AG04450 (cell line): ENCODE measurements at regions of chr9 and their contacts with region 1.

Region 1: DNA sequence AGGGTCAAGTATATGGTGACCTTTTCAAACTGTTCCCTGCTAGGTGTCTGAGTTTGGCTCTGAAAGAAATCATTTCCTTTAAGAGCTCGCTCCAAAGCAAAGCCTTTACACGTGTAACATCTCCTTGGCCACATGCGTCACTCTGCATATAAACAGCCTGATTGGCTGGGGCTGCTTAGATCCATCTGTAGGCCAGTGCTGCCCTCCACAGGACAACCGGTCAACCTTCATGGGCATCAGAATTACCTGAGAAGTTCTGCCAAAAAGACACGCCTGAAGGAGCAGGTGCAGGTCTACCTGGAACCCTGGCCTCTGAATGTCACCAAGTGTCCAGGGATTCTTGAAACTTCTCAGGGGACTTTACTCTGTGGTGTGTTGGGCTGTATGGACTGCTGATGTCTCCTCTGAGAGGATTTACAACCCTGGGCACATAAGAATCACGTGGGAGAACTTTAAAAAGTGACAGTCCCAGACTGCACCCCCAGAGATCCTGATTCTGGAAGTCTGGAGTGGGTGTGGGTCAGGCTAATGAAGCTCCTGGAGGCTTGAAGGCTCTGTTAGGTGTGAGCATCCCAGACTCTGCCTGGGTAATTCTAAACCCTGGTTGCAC is 497.6 kb downstream of the GADD45G start:
- DNase-seq: peak; percentile 55
- H3K4me3 ChIP-seq: no peak overlapping the region
- H3K27ac ChIP-seq: no peak overlapping the region
- H3K27me3 ChIP-seq: no peaks in the 10 kb centered on the region
- CTCF ChIP-seq: peak; percentile 73

Region 2: GRCh38 chr9:89576404-89576839 is 526.0 kb before region 1 on chr9:
- CTCF ChIA-PET with region 1: interaction called, 21 read pairs
- POLR2A ChIA-PET with region 1: no interaction called
- DNase-seq: no peak
- H3K4me3 ChIP-seq: no peak overlapping the region
- H3K27ac ChIP-seq: no peak overlapping the region
- H3K27me3 ChIP-seq: peaks cover 2% of the 10 kb centered on the region
- CTCF ChIP-seq: peak; percentile 66

Region 3: GRCh38 chr9:89597711-89598625 is 504.4 kb before region 1 on chr9:
- CTCF ChIA-PET with region 1: interaction called, 187 read pairs
- POLR2A ChIA-PET with region 1: no interaction called
- DNase-seq: peak; percentile 15
- H3K4me3 ChIP-seq: no peak overlapping the region
- H3K27ac ChIP-seq: no peak overlapping the region
- H3K27me3 ChIP-seq: peaks cover 34% of the 10 kb centered on the region
- CTCF ChIP-seq: peak; percentile 76

Region 4: DNA sequence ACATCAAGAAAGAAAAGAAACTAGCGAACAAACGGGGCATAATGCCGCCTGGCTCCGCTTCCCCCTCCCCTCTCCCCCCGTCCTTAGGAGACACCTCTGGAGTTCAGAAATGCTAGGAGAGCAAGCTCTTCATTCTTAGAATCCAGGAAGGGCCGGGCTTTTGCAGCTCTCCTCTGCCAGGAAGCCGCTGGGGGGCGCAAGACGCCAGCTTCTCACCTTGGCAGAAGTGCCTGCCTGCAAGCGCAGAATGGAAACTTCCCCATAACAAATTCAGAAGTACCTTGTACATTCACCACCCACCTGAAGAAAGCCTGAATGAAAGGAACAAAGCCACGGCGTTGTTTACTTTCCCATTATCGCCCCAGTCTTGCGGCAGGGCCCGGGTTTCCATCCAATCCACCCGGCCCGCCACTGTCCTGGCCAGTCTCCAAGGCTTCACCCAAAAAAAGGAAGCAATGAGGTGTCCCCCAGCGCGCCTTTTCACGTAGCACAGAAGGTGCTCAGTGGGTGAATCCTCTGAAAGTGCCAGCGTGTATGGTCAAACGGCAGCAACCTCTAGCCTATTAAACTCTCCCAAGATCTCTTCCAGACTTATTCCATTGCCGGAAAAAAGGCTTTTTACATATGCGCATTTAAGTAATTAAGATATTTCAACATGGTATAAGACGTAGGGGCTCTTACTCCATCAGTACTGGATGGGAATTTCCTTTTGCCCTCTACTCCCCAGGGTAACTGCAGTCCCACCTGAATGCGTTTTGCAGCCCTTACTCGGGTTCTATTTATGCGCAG is 499.2 kb before region 1 on chr9:
- CTCF ChIA-PET with region 1: interaction called, 187 read pairs
- POLR2A ChIA-PET with region 1: no interaction called
- DNase-seq: peak; percentile 13
- H3K4me3 ChIP-seq: no peak overlapping the region
- H3K27ac ChIP-seq: no peak overlapping the region
- H3K27me3 ChIP-seq: peaks cover 43% of the 10 kb centered on the region
- CTCF ChIP-seq: peak; percentile 86

Region 5: GRCh38 chr9:90114641-90115425 is 12.4 kb after region 1 on chr9:
- CTCF ChIA-PET with region 1: interaction called, 21 read pairs
- POLR2A ChIA-PET with region 1: no interaction called
- DNase-seq: no peak
- H3K4me3 ChIP-seq: no peak overlapping the region
- H3K27ac ChIP-seq: no peak overlapping the region
- H3K27me3 ChIP-seq: peaks cover 3% of the 10 kb centered on the region
- CTCF ChIP-seq: no peak

Region 6: GRCh38 chr9:90121762-90122161 is 19.4 kb after region 1 on chr9:
- CTCF ChIA-PET with region 1: interaction called, 21 read pairs
- POLR2A ChIA-PET with region 1: no interaction called
- DNase-seq: no peak
- H3K4me3 ChIP-seq: no peak overlapping the region
- H3K27ac ChIP-seq: no peak overlapping the region
- H3K27me3 ChIP-seq: no peaks in the 10 kb centered on the region
- CTCF ChIP-seq: no peak